IMR-90 (cell line): ENCODE measurements at regions of chr6 and their contacts with region 1.

Region 1: GRCh38 chr6:16332175-16332542 is 93.8 kb downstream of the GMPR start:
- DNase-seq: peak; percentile 78
- ATAC-seq: peak; percentile 57
- H3K4me3 ChIP-seq: no peak overlapping the region
- H3K27ac ChIP-seq: peak overlapping the region; percentile 18; the same call in 1 of the 2 replicates
- H3K4me1 ChIP-seq: peaks cover 16% of the 10 kb centered on the region
- H3K27me3 ChIP-seq: no peaks in the 10 kb centered on the region
- CTCF ChIP-seq: peak; percentile 94
- POLR2A ChIP-seq: no peak
- RAD21 ChIP-seq: peak; percentile 93

Region 2: DNA sequence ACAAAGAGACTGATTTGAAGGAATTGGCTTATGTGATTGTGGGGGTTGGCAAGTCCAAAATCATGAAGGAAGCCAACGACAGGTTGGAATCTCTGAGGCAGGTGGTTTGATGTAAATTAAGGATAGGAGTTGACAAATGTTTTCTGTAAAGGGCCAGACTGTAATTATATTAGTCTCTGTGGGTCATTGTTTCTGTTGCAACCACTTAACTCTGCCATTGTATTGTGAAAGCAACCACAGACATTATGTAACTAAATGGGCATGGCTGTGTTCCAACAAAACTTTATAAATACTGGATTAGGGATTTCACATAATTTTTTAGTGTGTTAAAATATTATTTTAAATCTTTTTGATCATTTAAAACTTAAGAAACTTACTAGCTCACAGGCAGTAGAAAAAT is 402.5 kb before region 1 on chr6:
- CTCF ChIA-PET with region 1: no interaction called
- POLR2A ChIA-PET with region 1: no interaction called
- dilution Hi-C with region 1: no loop called
- in situ Hi-C with region 1: no loop called
- intact Hi-C with region 1: no loop called
- DNase-seq: no peak
- ATAC-seq: no peak
- H3K4me3 ChIP-seq: no peak overlapping the region
- H3K27ac ChIP-seq: no peak overlapping the region
- H3K4me1 ChIP-seq: no peaks in the 10 kb centered on the region
- H3K27me3 ChIP-seq: no peaks in the 10 kb centered on the region; the same call in none of the 2 replicates
- CTCF ChIP-seq: no peak
- POLR2A ChIP-seq: no peak
- RAD21 ChIP-seq: no peak

Region 3: GRCh38 chr6:16292942-16293341 is 39.2 kb before region 1 on chr6:
- CTCF ChIA-PET with region 1: no interaction called
- POLR2A ChIA-PET with region 1: no interaction called
- dilution Hi-C with region 1: no loop called
- in situ Hi-C with region 1: no loop called
- intact Hi-C with region 1: no loop called
- DNase-seq: no peak
- ATAC-seq: no peak
- H3K4me3 ChIP-seq: no peak overlapping the region
- H3K27ac ChIP-seq: no peak overlapping the region
- H3K4me1 ChIP-seq: no peaks in the 10 kb centered on the region
- H3K27me3 ChIP-seq: no peaks in the 10 kb centered on the region
- CTCF ChIP-seq: no peak
- POLR2A ChIP-seq: no peak
- RAD21 ChIP-seq: no peak

Region 4: GRCh38 chr6:16409531-16410441 is 77.6 kb after region 1 on chr6:
- CTCF ChIA-PET with region 1: interaction called, 5 read pairs
- POLR2A ChIA-PET with region 1: no interaction called
- dilution Hi-C with region 1: no loop called
- in situ Hi-C with region 1: no loop called
- intact Hi-C with region 1: loop called (anchors 2 kb)
- DNase-seq: peak; percentile 45
- ATAC-seq: no peak
- H3K4me3 ChIP-seq: no peak overlapping the region
- H3K27ac ChIP-seq: no peak overlapping the region
- H3K4me1 ChIP-seq: peaks cover 14% of the 10 kb centered on the region
- H3K27me3 ChIP-seq: no peaks in the 10 kb centered on the region
- CTCF ChIP-seq: peak; percentile 50
- POLR2A ChIP-seq: no peak
- RAD21 ChIP-seq: peak; percentile 50

Region 5: DNA sequence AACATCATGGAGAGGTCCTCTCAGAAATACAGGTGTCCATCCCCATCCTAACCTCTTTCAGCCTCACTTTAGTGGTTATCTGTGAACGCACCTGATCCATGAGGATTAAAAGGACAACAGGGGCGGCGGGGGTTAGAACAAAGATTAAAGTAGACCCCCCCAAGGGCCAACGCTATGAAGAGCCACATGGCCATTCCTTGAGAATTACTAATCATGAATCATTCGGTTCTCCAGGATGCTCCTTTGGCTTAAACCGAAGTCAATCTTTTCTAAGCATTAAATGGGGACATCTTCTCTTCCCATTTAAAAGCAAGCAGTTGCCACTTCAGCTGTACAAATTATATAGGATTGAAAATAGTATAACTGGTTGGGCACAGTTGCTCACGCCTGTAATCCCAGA is 118.7 kb after region 1 on chr6:
- CTCF ChIA-PET with region 1: no interaction called
- POLR2A ChIA-PET with region 1: no interaction called
- dilution Hi-C with region 1: no loop called
- in situ Hi-C with region 1: no loop called
- intact Hi-C with region 1: no loop called
- DNase-seq: peak; percentile 82
- ATAC-seq: peak; percentile 22; the same call in 1 of the 2 replicates
- H3K4me3 ChIP-seq: no peak overlapping the region
- H3K27ac ChIP-seq: peak overlapping the region; percentile 64
- H3K4me1 ChIP-seq: peaks cover 20% of the 10 kb centered on the region
- H3K27me3 ChIP-seq: no peaks in the 10 kb centered on the region
- CTCF ChIP-seq: no peak
- POLR2A ChIP-seq: no peak
- RAD21 ChIP-seq: no peak

Region 6: DNA sequence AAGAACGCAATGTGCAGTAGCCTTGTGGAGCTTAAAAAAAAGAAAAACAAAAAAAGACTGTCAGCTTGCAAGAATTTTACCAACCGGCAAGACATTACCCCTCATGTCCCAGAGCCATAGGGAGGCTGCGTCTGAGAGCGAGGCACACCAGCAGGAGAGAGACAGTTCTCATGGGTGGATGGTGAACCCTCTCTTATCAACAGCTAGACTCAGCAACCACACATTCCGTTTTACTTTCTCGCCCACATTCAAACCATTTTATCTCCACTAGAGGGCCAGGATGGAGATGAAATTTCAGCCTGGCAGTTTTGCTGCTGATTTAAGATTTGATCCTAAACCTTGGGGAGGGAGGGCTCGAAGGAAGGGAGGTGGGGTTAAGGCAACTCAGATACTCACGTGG is 182.1 kb after region 1 on chr6:
- CTCF ChIA-PET with region 1: interaction called, 4 read pairs
- POLR2A ChIA-PET with region 1: no interaction called
- dilution Hi-C with region 1: no loop called
- in situ Hi-C with region 1: loop called (anchors 5 kb)
- intact Hi-C with region 1: loop called (anchors 5 kb)
- DNase-seq: peak; percentile 76
- ATAC-seq: peak; percentile 76
- H3K4me3 ChIP-seq: no peak overlapping the region
- H3K27ac ChIP-seq: no peak overlapping the region
- H3K4me1 ChIP-seq: peaks cover 5% of the 10 kb centered on the region; the same call in 1 of the 2 replicates
- H3K27me3 ChIP-seq: no peaks in the 10 kb centered on the region
- CTCF ChIP-seq: peak; percentile 66
- POLR2A ChIP-seq: no peak
- RAD21 ChIP-seq: peak; percentile 77

Region 7: GRCh38 chr6:16964553-16965501 is 632.7 kb after region 1 on chr6:
- CTCF ChIA-PET with region 1: no interaction called
- POLR2A ChIA-PET with region 1: no interaction called
- dilution Hi-C with region 1: no loop called
- in situ Hi-C with region 1: loop called (anchors 10 kb)
- intact Hi-C with region 1: loop called (anchors 10 kb)
- DNase-seq: peak; percentile 70
- ATAC-seq: peak; percentile 94
- H3K4me3 ChIP-seq: no peak overlapping the region
- H3K27ac ChIP-seq: no peak overlapping the region
- H3K4me1 ChIP-seq: peaks cover 16% of the 10 kb centered on the region
- H3K27me3 ChIP-seq: no peaks in the 10 kb centered on the region
- CTCF ChIP-seq: peak; percentile 90
- POLR2A ChIP-seq: no peak
- RAD21 ChIP-seq: peak; percentile 94